MCF 10A (cell line): ENCODE measurements at regions of chr6 and their contacts with region 1.

Region 1: GRCh38 chr6:24774696-24775519 is at the start of gene GMNN:
- DNase-seq: peak; percentile 96
- H3K4me3 Mint-ChIP-seq: peak within 1 kb of the TSS; percentile 98
- H3K27ac Mint-ChIP-seq: peak within 1 kb of the TSS; percentile 64
- H3K4me1 Mint-ChIP-seq: peaks cover 18% of the 10 kb centered on the region
- H3K27me3 Mint-ChIP-seq: no peaks in the 10 kb centered on the region
- CTCF ChIP-seq: no peak
- total RNA-seq, gene GMNN: 12.5 and 22.4 TPM in 2 replicates

Region 2: DNA sequence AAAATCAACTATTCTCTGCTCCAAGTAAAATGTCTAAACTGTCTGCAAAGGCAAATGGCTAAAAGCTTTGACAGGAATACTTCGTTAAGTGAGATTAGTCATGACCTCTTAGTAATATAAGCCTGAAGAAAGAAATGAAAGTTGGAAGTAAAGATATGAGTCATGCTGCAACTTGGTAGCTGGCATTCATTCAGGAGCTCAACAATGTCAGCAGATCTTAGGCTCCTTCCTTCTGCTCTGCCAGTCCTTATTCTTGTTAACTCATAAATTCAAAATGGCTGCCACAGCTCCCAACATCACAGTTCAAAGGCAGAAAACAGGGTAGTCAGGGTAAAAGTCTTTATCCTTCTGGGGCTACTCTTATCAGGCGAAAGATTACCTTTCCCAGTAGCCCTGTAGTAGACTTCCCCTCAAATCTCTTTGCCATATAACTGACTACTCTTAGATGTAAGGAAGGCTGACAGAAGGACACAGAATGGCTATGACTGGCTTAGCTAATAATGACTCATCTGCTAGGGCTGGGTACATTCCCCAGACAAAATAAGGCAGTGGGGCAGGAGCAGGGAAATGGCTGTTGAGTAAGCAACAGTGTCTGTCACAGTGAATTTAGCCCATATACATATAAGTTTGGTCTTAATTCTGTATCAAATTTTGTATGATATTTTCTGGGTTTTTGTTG is 31.5 kb before region 1 on chr6:
- CTCF ChIA-PET with region 1: no interaction called
- POLR2A ChIA-PET with region 1: interaction called, 26 read pairs
- intact Hi-C with region 1: no loop called
- DNase-seq: peak; percentile 94
- H3K4me3 Mint-ChIP-seq: peak overlapping the region; percentile 46
- H3K27ac Mint-ChIP-seq: peak overlapping the region; percentile 74
- H3K4me1 Mint-ChIP-seq: peaks cover 29% of the 10 kb centered on the region
- H3K27me3 Mint-ChIP-seq: no peaks in the 10 kb centered on the region
- CTCF ChIP-seq: no peak

Region 3: GRCh38 chr6:24788048-24788665 is 13.2 kb after region 1 on chr6:
- CTCF ChIA-PET with region 1: interaction called, 3 read pairs
- POLR2A ChIA-PET with region 1: interaction called, 11 read pairs
- intact Hi-C with region 1: no loop called
- DNase-seq: no peak
- H3K4me3 Mint-ChIP-seq: no peak overlapping the region
- H3K27ac Mint-ChIP-seq: no peak overlapping the region
- H3K4me1 Mint-ChIP-seq: no peaks in the 10 kb centered on the region
- H3K27me3 Mint-ChIP-seq: no peaks in the 10 kb centered on the region
- CTCF ChIP-seq: no peak

Region 4: GRCh38 chr6:24827162-24827561 is 52.3 kb after region 1 on chr6:
- CTCF ChIA-PET with region 1: no interaction called
- POLR2A ChIA-PET with region 1: interaction called, 15 read pairs
- intact Hi-C with region 1: no loop called
- DNase-seq: peak; percentile 64
- H3K4me3 Mint-ChIP-seq: no peak overlapping the region
- H3K27ac Mint-ChIP-seq: peak overlapping the region; percentile 59
- H3K4me1 Mint-ChIP-seq: peaks cover 18% of the 10 kb centered on the region
- H3K27me3 Mint-ChIP-seq: no peaks in the 10 kb centered on the region
- CTCF ChIP-seq: no peak

Region 5: GRCh38 chr6:24940311-24940917 is 165.5 kb after region 1 on chr6:
- CTCF ChIA-PET with region 1: no interaction called
- POLR2A ChIA-PET with region 1: no interaction called
- intact Hi-C with region 1: no loop called
- DNase-seq: no peak
- H3K4me3 Mint-ChIP-seq: no peak overlapping the region
- H3K27ac Mint-ChIP-seq: no peak overlapping the region
- H3K4me1 Mint-ChIP-seq: peaks cover 7% of the 10 kb centered on the region
- H3K27me3 Mint-ChIP-seq: no peaks in the 10 kb centered on the region
- CTCF ChIP-seq: no peak

Region 6: DNA sequence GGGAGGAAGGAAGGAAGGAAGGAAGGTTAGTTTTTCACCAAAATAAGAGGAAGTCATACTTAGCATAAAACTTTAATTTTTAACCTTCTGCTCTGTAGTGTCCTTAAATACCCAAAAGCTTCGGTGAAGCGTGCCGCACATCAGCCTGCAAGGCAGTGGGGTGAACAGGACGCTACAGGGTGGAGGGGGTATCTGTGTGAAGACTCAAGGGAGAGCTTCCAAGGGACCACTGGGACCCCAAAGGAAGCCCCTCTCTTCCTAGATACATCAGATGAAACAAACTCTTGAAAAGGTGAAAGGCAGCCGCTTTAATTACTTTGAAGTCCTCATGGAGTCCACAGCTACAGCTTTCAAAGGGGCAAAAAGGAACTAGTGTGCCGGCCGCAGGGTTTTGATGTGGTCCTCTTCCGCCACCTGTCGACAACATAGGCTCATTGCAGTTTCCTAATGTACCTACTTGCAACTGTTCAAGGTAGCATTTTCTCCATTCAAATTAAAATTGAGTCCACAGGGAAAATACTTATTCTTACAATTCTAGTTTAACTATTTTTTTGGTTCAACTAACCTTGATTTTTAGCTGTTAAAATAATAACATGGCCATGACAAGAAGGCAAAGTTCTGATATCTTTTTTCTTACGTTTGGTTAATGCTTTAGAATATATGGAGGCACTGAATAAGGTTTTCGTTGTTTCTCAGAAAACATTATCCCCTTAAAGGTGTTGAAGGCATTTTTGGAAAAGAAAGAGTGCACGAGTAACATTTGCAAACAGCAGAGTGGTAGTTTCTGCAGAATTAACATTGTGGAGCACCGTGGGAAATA is 295.8 kb after region 1 on chr6:
- CTCF ChIA-PET with region 1: interaction called, 6 read pairs
- POLR2A ChIA-PET with region 1: no interaction called
- intact Hi-C with region 1: loop called (anchors 2 kb)
- DNase-seq: peak; percentile 86
- H3K4me3 Mint-ChIP-seq: no peak overlapping the region
- H3K27ac Mint-ChIP-seq: no peak overlapping the region
- H3K4me1 Mint-ChIP-seq: no peaks in the 10 kb centered on the region
- H3K27me3 Mint-ChIP-seq: no peaks in the 10 kb centered on the region
- CTCF ChIP-seq: peak; percentile 91

Region 7: GRCh38 chr6:25601800-25602673 is 827.1 kb after region 1 on chr6:
- CTCF ChIA-PET with region 1: no interaction called
- POLR2A ChIA-PET with region 1: no interaction called
- intact Hi-C with region 1: loop called (anchors 10 kb)
- DNase-seq: peak; percentile 58
- H3K4me3 Mint-ChIP-seq: no peak overlapping the region
- H3K27ac Mint-ChIP-seq: no peak overlapping the region
- H3K4me1 Mint-ChIP-seq: no peaks in the 10 kb centered on the region
- H3K27me3 Mint-ChIP-seq: no peaks in the 10 kb centered on the region
- CTCF ChIP-seq: peak; percentile 47